Mammary epithelial cell (primary cell): ENCODE measurements at regions of chr5 and their contacts with region 1.

Region 1: GRCh38 chr5:1883120-1883924 is 597 bp upstream of the IRX4 start:
- DNase-seq: peak; percentile 57
- H3K4me3 ChIP-seq: peak overlapping the region; percentile 76 to 96 (median 79)
- H3K27ac ChIP-seq: peak overlapping the region; percentile 95
- H3K4me1 ChIP-seq: peaks cover 22% of the 10 kb centered on the region
- H3K27me3 ChIP-seq: no peaks in the 10 kb centered on the region
- CTCF ChIP-seq: peak; percentile 13 to 52

Region 2: GRCh38 chr5:1799602-1800471 is 83.5 kb before region 1 on chr5 and contains the start of gene MRPL36:
- CTCF ChIA-PET with region 1: no interaction called
- dilution Hi-C with region 1: no loop called
- in situ Hi-C with region 1: no loop called
- intact Hi-C with region 1: loop called (anchors 2 kb)
- DNase-seq: peak; percentile 87
- H3K4me3 ChIP-seq: peak within 1 kb of the TSS; percentile 69 to 86 (median 74)
- H3K27ac ChIP-seq: peak within 1 kb of the TSS; percentile 59
- H3K4me1 ChIP-seq: peaks cover 20% of the 10 kb centered on the region
- H3K27me3 ChIP-seq: no peaks in the 10 kb centered on the region
- CTCF ChIP-seq: no peak
- total RNA-seq, gene MRPL36: 47.2 to 82.2 TPM

Region 3: DNA sequence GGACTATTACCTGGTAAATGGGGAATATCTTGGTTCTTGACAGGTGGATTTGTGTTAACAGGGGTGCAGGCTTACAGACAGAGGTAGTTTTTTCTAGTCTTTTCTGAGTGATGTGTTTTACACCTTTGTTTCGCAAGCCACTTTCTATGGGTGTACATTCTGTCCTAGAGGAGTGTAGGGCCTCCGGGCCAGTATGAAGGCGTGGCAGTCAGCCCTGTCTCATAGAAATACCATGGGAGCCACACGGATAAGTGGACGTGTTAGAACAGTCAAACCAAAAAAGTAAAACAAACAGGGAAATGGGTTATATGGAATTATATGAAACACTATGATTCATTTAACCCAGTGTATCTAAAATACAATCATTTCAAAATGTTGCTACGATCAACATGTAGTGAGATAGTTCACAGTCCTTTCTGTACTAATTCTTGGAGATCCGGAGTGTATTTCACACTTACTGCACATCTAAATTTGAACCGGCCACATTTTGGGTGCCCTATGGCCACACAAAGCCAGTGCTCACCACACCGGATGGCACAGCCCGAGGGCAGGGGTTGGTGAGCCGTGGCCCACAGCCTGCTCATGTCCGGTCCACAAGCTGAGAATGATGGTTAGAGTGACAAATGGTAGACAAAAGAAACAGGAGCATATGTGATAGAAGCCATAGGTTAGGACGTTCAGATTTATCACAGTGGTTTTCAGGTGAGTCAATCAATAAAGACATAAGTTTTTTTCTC is 79.5 kb after region 1 on chr5:
- CTCF ChIA-PET with region 1: no interaction called
- dilution Hi-C with region 1: no loop called
- in situ Hi-C with region 1: no loop called
- intact Hi-C with region 1: loop called (anchors 1 kb)
- DNase-seq: peak; percentile 95
- H3K4me3 ChIP-seq: no peak overlapping the region
- H3K27ac ChIP-seq: peak overlapping the region; percentile 100
- H3K4me1 ChIP-seq: peaks cover 34% of the 10 kb centered on the region
- H3K27me3 ChIP-seq: no peaks in the 10 kb centered on the region
- CTCF ChIP-seq: no peak

Region 4: DNA sequence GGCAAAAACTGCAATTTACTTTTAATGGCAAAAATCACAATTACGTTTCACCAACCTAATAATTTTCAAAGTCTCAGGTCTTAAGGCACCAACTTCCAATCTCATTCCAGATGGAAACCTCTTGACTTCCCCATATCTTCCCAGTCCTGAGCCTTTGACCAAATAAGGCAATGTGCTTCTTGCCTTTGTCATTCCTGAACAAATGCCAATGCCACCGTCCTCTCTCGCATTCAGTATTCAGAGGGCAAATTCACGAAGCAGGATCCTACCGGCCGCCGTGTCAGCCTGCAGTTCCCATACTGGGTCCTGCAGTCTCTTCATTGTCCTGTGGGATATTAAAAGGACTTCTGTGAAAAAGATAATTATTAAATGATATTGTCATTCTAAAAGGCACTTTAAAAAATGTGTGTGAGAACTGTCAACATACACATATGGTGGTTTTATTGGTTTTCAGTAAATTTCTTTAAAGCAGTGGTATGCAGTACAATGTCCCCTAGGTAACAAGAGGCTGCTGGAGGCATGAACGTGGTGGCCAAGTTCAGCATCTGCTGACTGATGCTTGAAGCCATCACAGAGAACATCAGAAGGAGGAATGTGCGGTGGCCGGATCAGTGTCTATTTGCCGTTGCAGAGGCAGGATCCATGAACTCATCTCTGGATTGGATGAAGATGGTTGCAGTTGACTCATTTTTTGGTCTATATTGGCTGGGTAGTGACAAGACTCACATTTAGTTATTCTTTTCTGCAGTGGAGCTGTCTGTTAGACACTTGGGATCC is 100.8 kb after region 1 on chr5:
- CTCF ChIA-PET with region 1: no interaction called
- dilution Hi-C with region 1: no loop called
- in situ Hi-C with region 1: no loop called
- intact Hi-C with region 1: no loop called
- DNase-seq: no peak
- H3K4me3 ChIP-seq: no peak overlapping the region
- H3K27ac ChIP-seq: no peak overlapping the region
- H3K4me1 ChIP-seq: no peaks in the 10 kb centered on the region
- H3K27me3 ChIP-seq: no peaks in the 10 kb centered on the region
- CTCF ChIP-seq: no peak

Region 5: DNA sequence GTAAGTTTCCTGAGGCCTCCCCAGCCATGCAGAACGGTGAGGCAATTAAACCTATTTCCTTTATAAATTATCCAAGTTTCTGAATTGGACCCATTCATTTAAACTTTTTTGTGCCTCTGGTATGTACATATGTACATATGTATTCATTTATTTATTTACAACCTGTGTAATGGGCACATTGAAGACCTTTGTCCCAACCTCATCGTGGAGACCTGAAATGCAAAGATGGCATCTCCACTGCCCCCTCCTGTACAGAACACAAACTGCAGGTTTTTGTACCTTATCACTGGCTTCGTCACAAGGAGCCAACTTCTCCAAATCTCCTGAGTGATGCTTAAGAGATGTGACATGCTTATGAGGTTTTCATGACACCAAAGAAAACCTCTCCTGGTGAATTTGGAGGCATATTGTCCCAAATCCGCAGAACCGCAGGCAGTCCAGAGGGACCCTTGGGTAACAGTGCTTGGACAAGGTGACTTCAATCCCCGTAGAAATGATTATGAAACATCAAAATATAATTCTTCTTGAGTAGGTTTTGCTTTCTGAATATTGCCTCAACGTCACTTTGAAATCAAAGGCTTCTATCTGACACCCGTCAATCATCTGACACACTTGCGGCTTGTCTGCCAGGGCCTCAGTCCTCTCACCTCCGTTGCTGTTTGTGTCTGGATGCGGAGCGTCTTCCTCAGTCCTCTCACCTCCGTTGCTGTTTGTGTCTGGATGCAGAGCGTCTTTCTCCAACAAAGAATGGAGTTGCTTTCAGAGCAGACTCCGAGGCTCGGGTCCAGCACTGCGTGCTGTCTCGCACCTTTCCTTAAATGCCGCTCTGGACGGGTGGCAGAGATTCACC is 134.4 kb after region 1 on chr5:
- CTCF ChIA-PET with region 1: no interaction called
- dilution Hi-C with region 1: no loop called
- in situ Hi-C with region 1: no loop called
- intact Hi-C with region 1: loop called (anchors 1 kb)
- DNase-seq: no peak
- H3K4me3 ChIP-seq: no peak overlapping the region
- H3K27ac ChIP-seq: no peak overlapping the region
- H3K4me1 ChIP-seq: peaks cover 13% of the 10 kb centered on the region
- H3K27me3 ChIP-seq: no peaks in the 10 kb centered on the region
- CTCF ChIP-seq: peak; percentile 60 to 67

Region 6: DNA sequence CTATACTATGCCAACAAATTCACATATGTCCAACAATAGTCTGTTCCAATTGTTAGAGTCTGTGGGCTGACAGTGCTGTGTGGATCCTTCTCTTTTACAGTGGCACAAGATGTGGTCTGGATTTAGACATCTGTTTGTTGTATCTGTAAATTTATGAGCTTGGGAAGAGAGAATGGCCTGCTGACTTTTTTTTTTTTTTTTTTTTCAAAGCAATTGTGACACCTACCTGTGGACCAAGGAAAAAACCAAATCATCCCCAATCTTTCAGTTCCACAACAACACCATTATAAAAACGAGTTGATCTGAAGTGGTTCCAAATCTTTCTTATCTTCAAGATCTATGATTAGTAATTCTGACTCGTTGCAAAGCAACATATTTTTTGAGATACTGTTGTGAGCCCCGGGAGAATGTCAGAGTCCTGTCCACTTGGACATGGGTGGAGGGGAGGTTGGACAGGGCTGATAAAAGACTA is 863.3 kb after region 1 on chr5:
- CTCF ChIA-PET with region 1: no interaction called
- dilution Hi-C with region 1: no loop called
- in situ Hi-C with region 1: no loop called
- intact Hi-C with region 1: loop called (anchors 5 kb)
- DNase-seq: peak; percentile 84
- H3K4me3 ChIP-seq: peak overlapping the region; percentile 30 to 94 (median 78)
- H3K27ac ChIP-seq: peak overlapping the region; percentile 81
- H3K4me1 ChIP-seq: peaks cover 33% of the 10 kb centered on the region
- H3K27me3 ChIP-seq: no peaks in the 10 kb centered on the region
- CTCF ChIP-seq: peak; percentile 2 to 30